Prostate gland (tissue), 2 donors: ENCODE measurements at regions of chr13 and their contacts with region 1.

Region 1: DNA sequence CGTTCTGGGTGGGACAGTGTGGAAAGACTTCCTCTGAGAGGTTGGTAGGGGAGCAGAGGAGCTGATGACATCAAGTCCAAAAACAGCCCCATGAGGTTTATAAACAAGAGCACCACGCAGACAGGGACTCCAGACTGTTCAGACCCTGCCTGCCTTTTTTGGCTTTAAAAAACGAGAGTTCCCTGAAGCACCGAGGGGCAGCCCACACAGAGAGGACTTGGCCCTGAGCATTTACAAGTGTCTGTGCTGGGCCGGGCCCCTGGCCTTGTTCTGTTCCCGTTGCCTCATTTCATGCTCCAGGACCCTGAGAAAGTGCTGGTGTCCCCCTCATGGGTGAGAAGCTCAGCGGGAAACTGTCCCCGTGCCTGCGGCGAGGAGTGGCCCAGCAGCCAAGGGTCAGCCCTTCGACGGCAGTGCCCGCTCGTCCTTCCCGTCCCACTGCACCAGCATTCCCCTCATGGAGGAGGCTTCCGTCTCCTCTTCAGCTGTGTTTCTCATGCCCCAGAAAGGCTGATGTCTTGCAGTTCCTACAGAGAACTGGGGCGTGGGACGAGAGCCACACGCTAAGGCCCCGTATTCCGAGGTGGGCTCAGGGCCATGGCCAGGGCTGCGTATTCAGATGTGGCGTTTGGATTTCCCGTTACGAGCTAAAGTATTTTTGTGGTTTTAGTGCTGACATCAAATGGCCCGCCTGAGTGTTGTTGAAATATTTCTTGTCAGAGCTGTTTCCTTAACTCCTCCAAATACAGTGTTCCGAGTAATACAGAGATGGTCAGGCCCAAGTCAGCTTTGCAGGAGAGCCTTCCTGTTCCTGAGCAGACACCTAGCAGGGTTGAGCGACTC is 93.5 kb downstream of the ATP11A start:
- DNase-seq: no peak
- H3K4me3 ChIP-seq: no peak overlapping the region
- H3K27ac ChIP-seq: peak overlapping the region; percentile 11 to 46
- H3K4me1 ChIP-seq: no peaks in the 10 kb centered on the region
- H3K27me3 ChIP-seq: no peaks in the 10 kb centered on the region
- CTCF ChIP-seq: no peak
- POLR2A ChIP-seq: no peak

Region 2: DNA sequence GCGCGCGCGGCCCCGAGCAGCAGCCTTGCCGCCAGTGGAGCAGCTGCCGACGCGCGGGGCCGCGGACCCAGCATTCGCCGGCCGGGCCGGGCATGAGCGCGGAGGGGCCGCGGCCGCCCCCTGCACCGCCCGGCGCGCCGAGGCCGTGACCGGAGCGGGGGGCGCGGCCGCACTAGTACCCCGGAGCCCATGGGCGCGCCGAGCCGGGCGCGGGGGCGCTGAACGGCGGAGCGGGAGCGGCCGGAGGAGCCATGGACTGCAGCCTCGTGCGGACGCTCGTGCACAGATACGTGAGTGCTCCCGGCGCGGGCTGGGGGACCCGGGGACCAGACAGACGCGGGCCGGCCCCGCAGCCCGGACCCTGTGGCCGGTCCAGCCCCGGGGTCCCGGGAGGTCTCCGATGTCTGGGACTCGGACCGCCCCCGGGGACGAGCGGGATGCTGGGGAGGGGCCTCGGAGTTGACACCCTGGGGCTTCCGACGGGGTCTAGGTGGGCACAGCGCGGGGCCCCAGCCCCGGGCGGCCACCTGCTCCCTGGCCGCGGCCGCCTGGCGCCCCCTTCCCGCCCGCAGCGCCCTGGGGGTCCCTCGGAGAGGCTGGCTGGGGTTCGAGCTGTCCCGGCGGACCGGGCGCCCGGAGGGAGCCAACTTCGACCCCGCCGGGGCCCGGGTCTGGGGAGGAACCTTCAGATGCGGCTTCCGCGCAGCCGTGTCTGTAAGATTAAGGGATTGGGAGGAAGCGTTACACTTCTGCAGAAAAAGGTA is 93.0 kb before region 1 on chr13:
- intact Hi-C with region 1: no loop called
- DNase-seq: peak; percentile 18
- H3K4me3 ChIP-seq: peak overlapping the region; percentile 69 to 79
- H3K27ac ChIP-seq: peak overlapping the region; percentile 85 to 87
- H3K4me1 ChIP-seq: no peaks in the 10 kb centered on the region
- H3K27me3 ChIP-seq: no peaks in the 10 kb centered on the region
- CTCF ChIP-seq: no peak
- POLR2A ChIP-seq: no peak

Region 3: GRCh38 chr13:112711528-112712265 is 71.7 kb before region 1 on chr13:
- intact Hi-C with region 1: loop called (anchors 5 kb)
- DNase-seq: no peak
- H3K4me3 ChIP-seq: no peak overlapping the region
- H3K27ac ChIP-seq: peak overlapping the region; percentile 46 to 53
- H3K4me1 ChIP-seq: no peaks in the 10 kb centered on the region
- H3K27me3 ChIP-seq: no peaks in the 10 kb centered on the region
- CTCF ChIP-seq: no peak
- POLR2A ChIP-seq: no peak